ENCODE measurements at regions of chr12 and their contacts with region 1.

Region 1: GRCh38 chr12:49776413-49776812 is 35.1 kb downstream of the TMBIM6 start:
- DNase-seq: peak; percentile 68
- H3K4me3 Mint-ChIP-seq: no peak overlapping the region
- H3K27ac Mint-ChIP-seq: no peak overlapping the region
- H3K4me1 Mint-ChIP-seq: peaks cover 17% of the 10 kb centered on the region
- H3K27me3 Mint-ChIP-seq: peaks cover 20% of the 10 kb centered on the region

Region 2: DNA sequence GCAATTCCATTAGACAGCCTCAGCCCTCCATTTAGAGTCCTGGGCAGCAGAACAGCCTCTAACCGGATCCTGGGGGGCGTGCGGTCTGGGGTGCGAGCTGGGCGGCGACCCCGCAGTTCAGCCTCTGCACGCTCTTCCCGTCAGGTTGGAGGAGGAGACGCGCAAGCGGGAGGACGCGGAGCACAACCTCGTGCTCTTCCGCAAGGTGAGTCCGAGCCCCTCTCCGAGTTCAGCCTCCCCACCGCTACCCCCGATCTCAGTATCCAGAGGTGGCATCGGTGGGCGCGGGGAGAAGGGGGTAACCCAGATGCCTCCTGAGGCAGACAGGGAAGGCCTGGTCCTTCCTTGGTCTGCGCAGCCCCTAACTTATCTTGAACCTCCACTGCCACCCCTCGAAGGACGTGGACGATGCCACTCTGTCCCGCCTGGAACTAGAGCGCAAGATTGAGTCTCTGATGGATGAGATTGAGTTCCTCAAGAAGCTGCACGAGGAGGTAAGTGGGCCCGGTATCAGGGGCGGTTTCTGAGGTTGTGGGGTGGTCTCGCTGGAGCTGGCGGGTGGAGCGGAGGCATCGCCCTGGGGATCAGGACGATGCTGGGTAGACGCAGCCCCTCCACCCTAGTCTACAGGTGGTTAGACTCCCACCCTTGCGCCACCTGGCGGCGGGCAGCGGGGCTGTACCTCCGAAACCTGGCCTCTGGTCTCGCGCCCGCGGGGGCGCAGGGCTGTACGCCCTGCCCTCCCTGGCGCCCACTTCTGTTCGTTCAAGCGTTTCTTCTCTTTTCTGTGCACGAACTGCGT is 480.2 kb before region 1 on chr12:
- CTCF ChIA-PET with region 1: no interaction called
- POLR2A ChIA-PET with region 1: no interaction called
- DNase-seq: peak; percentile 68
- H3K4me3 Mint-ChIP-seq: peak overlapping the region; percentile 62
- H3K27ac Mint-ChIP-seq: no peak overlapping the region
- H3K4me1 Mint-ChIP-seq: peaks cover 34% of the 10 kb centered on the region
- H3K27me3 Mint-ChIP-seq: peaks cover 53% of the 10 kb centered on the region

Region 3: DNA sequence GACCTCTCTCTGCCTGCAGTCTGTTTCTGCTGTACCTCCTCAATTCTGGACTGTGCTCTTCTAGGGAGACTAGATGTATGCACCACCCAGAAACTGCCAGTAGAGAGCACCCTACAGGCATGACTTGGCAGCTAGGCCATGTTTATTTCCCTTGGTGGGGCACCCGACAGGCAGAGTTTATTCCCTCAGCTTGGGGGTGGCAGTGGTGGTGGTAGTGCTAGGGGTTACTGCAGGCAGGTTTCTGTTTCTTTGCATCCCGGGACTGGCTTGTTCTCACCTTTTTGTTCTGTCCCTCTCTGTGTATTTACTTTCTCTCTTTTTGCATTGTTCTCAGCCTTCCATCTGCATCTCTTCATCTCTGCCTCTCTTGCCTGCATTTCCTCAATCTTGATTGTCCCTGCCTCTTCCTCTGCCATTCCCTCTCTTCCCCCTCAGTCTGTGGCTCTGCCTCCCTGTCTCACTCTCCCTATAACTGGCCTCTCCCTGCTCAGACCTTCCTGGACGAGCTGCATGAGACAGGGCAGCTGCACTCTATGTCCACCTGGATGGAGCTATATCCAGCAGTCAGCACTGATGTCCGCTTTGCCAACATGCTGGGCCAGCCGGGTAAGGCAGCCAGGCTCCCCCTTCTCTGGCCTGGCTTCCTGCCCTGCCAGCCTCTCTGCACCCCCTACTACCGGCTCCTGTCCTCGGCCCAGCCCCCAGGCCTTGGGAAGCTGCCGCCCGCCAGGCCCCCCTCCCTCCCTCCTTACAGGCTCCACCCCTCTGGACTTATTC is 139.2 kb before region 1 on chr12:
- CTCF ChIA-PET with region 1: interaction called, 25 read pairs
- POLR2A ChIA-PET with region 1: no interaction called
- DNase-seq: peak; percentile 68
- H3K4me3 Mint-ChIP-seq: no peak overlapping the region
- H3K27ac Mint-ChIP-seq: no peak overlapping the region
- H3K4me1 Mint-ChIP-seq: peaks cover 16% of the 10 kb centered on the region
- H3K27me3 Mint-ChIP-seq: no peaks in the 10 kb centered on the region

Region 4: GRCh38 chr12:49733219-49734017 is 43.0 kb before region 1 on chr12:
- CTCF ChIA-PET with region 1: no interaction called
- POLR2A ChIA-PET with region 1: no interaction called
- DNase-seq: no peak
- H3K4me3 Mint-ChIP-seq: no peak overlapping the region
- H3K27ac Mint-ChIP-seq: no peak overlapping the region
- H3K4me1 Mint-ChIP-seq: peaks cover 5% of the 10 kb centered on the region
- H3K27me3 Mint-ChIP-seq: peaks cover 10% of the 10 kb centered on the region

Region 5: DNA sequence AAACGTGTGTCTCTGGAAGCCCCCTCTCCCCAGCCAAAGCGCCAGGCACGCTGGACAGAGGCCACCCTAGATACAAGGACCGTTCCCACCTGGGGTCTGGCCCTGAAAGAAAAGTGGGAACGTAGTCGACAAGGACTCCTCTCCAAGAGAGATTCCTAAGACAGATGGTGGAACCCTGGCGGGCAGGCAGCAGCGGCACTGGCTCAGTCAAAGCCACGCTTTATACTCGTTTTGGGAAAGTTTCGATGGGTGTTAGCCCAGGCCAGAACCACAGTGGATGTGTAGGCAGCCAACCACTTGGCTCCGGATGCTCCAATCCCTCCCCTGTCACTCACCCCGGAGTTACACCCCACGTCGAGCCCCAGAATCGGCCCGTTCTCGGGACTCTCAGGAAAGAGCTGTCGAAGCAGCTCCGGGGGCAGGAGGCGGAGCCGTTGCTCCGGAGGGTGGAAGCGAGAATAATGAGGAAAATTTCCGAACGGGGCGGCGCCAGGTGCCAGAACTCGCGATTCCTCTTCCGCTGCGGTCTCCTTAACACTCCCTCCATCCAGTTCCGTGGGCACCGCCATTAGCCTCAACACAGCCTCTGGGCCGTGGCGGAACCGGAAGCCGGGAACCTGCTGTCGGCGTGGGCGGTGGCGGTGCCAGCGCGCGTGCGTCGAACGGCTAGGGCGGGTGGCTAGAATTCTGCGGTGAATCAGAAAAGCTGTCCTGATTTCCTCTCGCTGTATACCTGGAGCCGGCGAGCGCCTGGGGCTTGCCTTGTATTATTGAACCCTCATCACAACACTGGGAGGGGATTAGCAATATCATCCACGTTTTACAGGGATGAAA is 66.3 kb after region 1 on chr12 and contains the start of gene BCDIN3D:
- CTCF ChIA-PET with region 1: interaction called, 34 read pairs
- POLR2A ChIA-PET with region 1: interaction called, 3 read pairs
- DNase-seq: peak; percentile 93
- H3K4me3 Mint-ChIP-seq: peak within 1 kb of the TSS; percentile 81
- H3K27ac Mint-ChIP-seq: peak within 1 kb of the TSS; percentile 79
- H3K4me1 Mint-ChIP-seq: peaks cover 42% of the 10 kb centered on the region
- H3K27me3 Mint-ChIP-seq: no peaks in the 10 kb centered on the region
- total RNA-seq, gene BCDIN3D: 8.9 to 9.9 TPM